Heart right ventricle (tissue), 16 donors: ENCODE measurements at regions of chr6 and their contacts with region 1.

Region 1: GRCh38 chr6:99868074-99868702 is 125.8 kb downstream of the MCHR2 start:
- DNase-seq: peak; percentile 50 to 71
- ATAC-seq: peak in 5 of 8 donors; percentile 38 to 76 (median 58)
- H3K4me3 ChIP-seq: peak overlapping the region in 1 of 10 donors; percentile 23
- H3K27ac ChIP-seq: no peak overlapping the region
- H3K4me1 ChIP-seq: no peaks in the 10 kb centered on the region
- H3K27me3 ChIP-seq: peaks cover 0 to 32% (median 11%) of the 10 kb centered on the region in 7 donors
- CTCF ChIP-seq: peak; percentile 51 to 82 (median 76)

Region 2: DNA sequence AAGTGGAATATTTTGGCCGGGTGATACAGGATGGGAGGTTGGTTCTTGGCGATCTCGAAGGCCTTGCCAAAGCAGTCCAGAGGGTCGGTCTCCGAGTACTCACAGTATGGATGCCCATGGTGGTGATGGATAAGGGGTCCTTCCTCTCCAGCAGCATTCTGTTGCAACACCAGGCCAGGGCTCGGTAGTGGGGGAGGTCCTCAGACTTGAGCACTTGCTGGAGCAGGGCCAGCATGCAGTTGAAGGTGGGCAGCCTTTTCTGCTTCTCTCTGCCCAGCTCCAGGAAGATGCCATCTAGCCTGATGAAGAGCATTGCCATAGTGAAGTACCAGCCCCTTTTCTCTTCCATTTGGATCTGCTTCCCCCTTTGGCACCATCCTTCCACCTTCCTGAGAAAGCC is 225.2 kb after region 1 on chr6:
- intact Hi-C with region 1: loop called in 7 of 10 experiments (anchors 2 to 10 kb)
- DNase-seq: no peak
- ATAC-seq: no peak
- H3K4me3 ChIP-seq: no peak overlapping the region
- H3K27ac ChIP-seq: no peak overlapping the region
- H3K4me1 ChIP-seq: no peaks in the 10 kb centered on the region
- H3K27me3 ChIP-seq: peaks cover 0 to 8% (median 0%) of the 10 kb centered on the region in 7 donors
- CTCF ChIP-seq: no peak

Region 3: GRCh38 chr6:100099189-100100074 is 231.2 kb after region 1 on chr6:
- intact Hi-C with region 1: loop called in 8 of 10 experiments (anchors 2 to 10 kb)
- DNase-seq: no peak
- ATAC-seq: no peak
- H3K4me3 ChIP-seq: no peak overlapping the region
- H3K27ac ChIP-seq: no peak overlapping the region
- H3K4me1 ChIP-seq: no peaks in the 10 kb centered on the region
- H3K27me3 ChIP-seq: peaks cover 0 to 14% (median 6%) of the 10 kb centered on the region in 7 donors
- CTCF ChIP-seq: peak in 8 of 9 donors; percentile 16 to 61 (median 50)